ENCODE measurements at regions of chr1 and their contacts with region 1.

Region 1: GRCh38 chr1:53182111-53182593 is 14.5 kb upstream of the CPT2 start:
- DNase-seq: peak; percentile 92

Region 2: GRCh38 chr1:52702886-52703787 is 479.0 kb before region 1 on chr1:
- intact Hi-C with region 1: loop called (anchors 10 kb)
- DNase-seq: peak; percentile 96

Region 3: GRCh38 chr1:52834798-52835197 is 347.4 kb before region 1 on chr1:
- intact Hi-C with region 1: loop called (anchors 10 kb)
- DNase-seq: no peak

Region 4: DNA sequence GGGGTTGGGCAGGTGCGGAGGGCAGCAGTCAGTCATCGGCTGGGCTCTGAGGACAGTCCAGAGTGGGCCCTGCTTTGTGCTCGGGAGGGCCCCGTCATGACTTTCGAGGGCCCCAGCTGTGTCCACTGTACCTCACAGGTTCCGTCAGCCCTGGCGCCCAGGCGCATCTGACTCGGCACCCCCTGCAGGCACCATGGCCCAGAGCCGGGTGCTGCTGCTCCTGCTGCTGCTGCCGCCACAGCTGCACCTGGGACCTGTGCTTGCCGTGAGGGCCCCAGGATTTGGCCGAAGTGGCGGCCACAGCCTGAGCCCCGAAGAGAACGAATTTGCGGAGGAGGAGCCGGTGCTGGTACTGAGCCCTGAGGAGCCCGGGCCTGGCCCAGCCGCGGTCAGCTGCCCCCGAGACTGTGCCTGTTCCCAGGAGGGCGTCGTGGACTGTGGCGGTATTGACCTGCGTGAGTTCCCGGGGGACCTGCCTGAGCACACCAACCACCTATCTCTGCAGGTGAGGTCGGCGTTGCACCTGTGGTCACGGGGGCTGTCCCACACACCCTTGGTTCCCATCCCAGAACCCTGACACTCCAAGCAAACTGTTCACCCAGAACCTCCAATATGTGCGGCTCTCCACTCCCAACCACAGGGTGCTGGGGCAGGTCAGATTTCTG is 112.4 kb before region 1 on chr1:
- intact Hi-C with region 1: loop called (anchors 5 kb)
- DNase-seq: peak; percentile 63

Region 5: GRCh38 chr1:53145942-53146708 is 36.0 kb before region 1 on chr1:
- intact Hi-C with region 1: no loop called
- DNase-seq: no peak

Region 6: DNA sequence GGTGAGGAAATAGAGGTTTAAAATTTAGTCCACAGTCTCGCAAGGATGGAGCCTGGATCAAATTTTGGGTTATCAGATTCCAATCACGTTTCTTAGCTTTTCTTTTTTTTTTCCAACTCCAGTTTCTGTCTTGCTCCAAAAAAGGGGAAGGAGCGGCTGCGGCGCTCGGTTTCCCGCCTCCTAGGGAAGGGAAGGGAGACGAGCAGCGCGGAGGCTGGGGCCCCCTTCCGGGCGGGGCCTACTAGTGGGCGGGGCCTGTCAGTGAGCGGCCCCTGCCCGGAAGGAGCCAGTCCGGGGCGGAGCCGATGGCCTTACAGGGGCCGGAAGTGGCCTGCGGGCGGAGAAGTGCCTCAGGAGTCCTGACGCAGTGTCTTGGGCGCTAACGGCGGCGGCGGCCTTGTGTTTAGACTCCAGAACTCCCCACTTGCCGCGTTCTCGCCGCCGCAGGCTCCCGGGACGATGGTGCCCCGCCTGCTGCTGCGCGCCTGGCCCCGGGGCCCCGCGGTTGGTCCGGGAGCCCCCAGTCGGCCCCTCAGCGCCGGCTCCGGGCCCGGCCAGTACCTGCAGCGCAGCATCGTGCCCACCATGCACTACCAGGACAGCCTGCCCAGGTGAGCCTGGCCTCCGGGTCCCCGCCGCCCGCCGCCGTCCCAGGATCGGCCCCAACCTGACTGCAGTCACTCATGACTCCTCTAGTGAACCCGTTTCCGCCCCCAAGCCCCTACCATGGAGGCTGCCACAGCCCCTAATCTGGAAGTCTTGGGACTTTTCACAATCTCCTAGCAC is 14.5 kb after region 1 on chr1 and contains the start of gene CPT2:
- intact Hi-C with region 1: no loop called
- DNase-seq: peak; percentile 97
- total RNA-seq, gene CPT2: 20.4 TPM